ENCODE measurements at regions of chr9 and their contacts with region 1.

Region 1: DNA sequence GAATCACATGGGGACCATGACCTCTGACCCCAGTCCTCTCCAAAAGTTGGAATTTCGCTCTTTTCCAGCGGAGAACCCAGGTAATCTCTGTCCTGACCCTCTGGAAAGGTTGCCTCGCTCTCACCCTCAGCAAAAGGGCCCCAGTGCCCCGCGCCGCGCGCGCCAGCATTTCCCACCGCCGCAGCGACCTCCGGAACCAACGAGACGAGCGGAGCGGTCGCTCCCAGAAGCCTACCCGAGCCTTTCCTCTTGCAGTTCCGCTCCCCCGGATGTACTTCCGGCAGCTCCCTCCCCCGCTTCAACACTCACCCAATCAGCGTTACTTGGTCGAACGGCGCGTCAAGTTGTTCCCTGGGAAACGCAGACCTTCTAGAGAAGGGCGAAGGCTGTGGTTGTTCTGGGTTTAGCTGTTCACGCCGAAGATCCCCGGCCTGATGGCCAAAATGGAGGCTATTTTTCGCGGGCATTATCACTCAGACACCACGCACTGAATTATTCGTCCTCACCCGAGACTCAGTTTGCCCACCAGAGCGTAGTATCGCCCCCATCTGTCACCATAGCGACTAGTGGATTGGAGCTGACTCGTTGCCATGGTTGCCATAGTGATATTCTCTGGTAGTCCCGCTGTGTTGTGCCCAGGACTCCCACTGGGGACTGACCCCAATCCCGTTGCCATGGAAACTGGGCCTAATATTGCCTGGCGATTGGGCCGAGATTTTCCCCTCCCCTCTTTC is at the start of gene STOML2:
- DNase-seq: peak; percentile 97
- H3K4me3 Mint-ChIP-seq: peak within 1 kb of the TSS; percentile 94
- H3K27ac Mint-ChIP-seq: peak within 1 kb of the TSS; percentile 97
- H3K4me1 Mint-ChIP-seq: peaks cover 27% of the 10 kb centered on the region
- H3K27me3 Mint-ChIP-seq: no peaks in the 10 kb centered on the region
- total RNA-seq, gene STOML2: 258 and 262 TPM in 2 replicates

Region 2: DNA sequence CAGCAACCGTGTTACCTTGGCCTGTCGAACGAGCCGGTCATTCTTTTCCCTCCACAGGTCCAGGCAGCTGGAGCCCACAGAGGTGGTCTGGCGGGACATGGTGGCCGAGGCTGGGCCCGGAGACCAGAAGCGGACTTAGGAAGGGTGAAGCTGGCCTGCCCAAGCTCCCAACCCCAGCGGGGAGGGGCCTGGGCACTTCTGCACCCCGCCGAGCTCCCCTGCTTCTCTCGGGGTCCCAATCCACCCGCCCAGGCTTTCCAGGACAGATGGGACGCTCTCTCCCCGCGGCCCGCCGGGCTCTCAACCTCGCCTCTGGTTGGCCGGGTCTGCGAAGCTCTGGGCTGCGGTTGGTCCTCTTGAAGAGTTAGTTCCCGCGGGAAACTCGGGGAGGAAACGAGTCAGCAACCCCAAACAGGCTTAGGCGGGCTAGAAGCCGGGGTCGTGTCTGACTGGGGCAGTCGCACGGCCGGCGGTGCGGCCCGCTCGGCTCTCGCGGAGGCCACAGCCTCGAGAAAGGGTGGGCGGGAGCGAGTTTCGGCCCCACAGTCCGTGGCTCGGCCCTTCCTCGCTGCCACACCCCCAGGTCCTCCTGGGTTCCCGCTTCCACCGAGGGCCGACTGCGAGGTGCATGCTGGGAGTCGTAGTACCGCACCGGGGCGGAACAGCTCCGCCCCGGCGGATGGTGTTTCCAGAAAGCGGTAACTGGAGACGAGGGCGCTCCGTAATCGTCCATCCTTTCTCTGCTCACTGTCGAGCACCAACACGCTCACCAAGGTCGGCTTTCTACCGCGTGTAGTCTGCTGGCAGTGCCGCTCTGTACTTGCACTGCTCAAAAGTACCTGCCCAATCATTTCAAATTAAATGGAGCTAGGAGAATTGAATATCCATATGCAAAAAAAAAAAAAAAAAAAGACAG is 23.4 kb before region 1 on chr9 and contains the start of gene FANCG:
- intact Hi-C with region 1: loop called (anchors 1 kb)
- DNase-seq: peak; percentile 96
- H3K4me3 Mint-ChIP-seq: peak within 1 kb of the TSS; percentile 99
- H3K27ac Mint-ChIP-seq: peak within 1 kb of the TSS; percentile 100
- H3K4me1 Mint-ChIP-seq: peaks cover 30% of the 10 kb centered on the region
- H3K27me3 Mint-ChIP-seq: no peaks in the 10 kb centered on the region
- total RNA-seq, gene FANCG: 114 and 122 TPM in 2 replicates